Psoas muscle (tissue), 8 donors: ENCODE measurements at regions of chr5 and their contacts with region 1.

Region 1: DNA sequence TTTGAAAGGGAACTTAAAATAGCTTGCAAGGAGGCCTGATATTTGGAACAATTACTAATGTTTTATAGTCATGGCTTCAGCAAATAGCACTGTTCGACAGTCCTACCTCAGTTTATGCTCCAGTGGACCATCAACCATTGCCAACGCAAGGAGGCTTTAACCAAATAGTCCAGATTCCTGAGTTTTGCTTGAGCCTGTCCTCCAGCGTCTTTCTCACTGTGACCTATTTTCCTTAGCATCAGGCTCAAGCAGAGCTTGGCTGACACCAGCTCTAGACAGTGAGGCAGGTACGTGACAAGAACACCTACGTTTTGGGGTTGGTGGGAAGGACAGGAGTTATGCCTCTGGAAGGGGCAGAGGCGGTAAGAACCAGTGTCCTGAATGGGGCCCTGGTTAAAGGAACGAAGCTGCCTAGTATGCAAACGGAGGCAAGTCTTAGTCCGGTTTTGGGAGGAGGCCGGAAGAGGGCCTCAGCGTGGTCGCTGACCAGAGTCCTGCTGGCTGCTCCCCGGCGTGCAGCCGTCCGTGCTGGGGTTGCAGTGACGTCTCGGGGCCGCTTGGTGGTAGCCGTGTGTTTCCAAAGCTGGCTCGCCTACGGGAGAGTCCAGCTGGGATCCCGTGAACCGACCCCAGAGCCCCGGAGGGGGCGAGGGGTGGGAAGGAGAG is 998 bp upstream of the FGF18 start:
- DNase-seq: peak; percentile 82 to 89
- ATAC-seq: peak; percentile 86 to 91 (median 86)
- H3K4me3 ChIP-seq: peak overlapping the region; percentile 62
- H3K27ac ChIP-seq: no peak overlapping the region
- H3K4me1 ChIP-seq: peaks cover 19% of the 10 kb centered on the region
- H3K27me3 ChIP-seq: peaks cover 0 to 19% (median 0%) of the 10 kb centered on the region in 3 donors
- CTCF ChIP-seq: peak; percentile 93

Region 2: GRCh38 chr5:171405601-171406005 is 12.8 kb before region 1 on chr5:
- intact Hi-C with region 1: no loop called
- DNase-seq: no peak
- ATAC-seq: no peak
- H3K4me3 ChIP-seq: no peak overlapping the region
- H3K27ac ChIP-seq: no peak overlapping the region
- H3K4me1 ChIP-seq: no peaks in the 10 kb centered on the region
- H3K27me3 ChIP-seq: no peaks in the 10 kb centered on the region
- CTCF ChIP-seq: no peak

Region 3: GRCh38 chr5:171474230-171474813 is 55.9 kb after region 1 on chr5:
- intact Hi-C with region 1: no loop called
- DNase-seq: peak in 1 of 2 donors; percentile 63
- ATAC-seq: peak in 1 of 4 donors; percentile 51
- H3K4me3 ChIP-seq: no peak overlapping the region
- H3K27ac ChIP-seq: no peak overlapping the region
- H3K4me1 ChIP-seq: no peaks in the 10 kb centered on the region
- H3K27me3 ChIP-seq: no peaks in the 10 kb centered on the region
- CTCF ChIP-seq: no peak

Region 4: GRCh38 chr5:171571663-171572062 is 153.2 kb after region 1 on chr5:
- intact Hi-C with region 1: no loop called
- DNase-seq: no peak
- ATAC-seq: no peak
- H3K4me3 ChIP-seq: no peak overlapping the region
- H3K27ac ChIP-seq: no peak overlapping the region
- H3K4me1 ChIP-seq: no peaks in the 10 kb centered on the region
- H3K27me3 ChIP-seq: no peaks in the 10 kb centered on the region
- CTCF ChIP-seq: no peak

Region 5: DNA sequence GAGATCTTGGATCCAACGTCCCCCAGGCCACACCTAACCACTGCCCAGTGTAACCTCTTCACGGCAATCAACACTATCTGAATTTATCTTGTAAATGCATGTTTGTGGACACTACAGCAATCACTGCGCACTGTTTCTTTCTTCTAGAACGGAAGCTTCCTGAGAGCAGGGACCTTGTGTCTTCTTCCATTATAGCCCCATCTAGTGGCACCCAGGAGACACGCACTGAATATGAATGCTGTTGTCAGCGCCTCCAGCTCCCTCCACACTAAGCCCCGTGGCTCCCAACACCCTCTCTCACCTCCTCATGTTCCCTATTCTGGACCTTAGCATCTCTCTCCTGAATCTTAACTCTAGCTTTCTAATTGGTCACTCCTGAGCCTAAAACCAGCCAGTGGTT is 439.9 kb after region 1 on chr5:
- intact Hi-C with region 1: loop called in 1 of 2 experiments (anchors 5 kb)
- DNase-seq: no peak
- ATAC-seq: peak in 3 of 4 donors; percentile 48 to 70 (median 61)
- H3K4me3 ChIP-seq: no peak overlapping the region
- H3K27ac ChIP-seq: no peak overlapping the region
- H3K4me1 ChIP-seq: no peaks in the 10 kb centered on the region
- H3K27me3 ChIP-seq: no peaks in the 10 kb centered on the region
- CTCF ChIP-seq: peak; percentile 22

Region 6: DNA sequence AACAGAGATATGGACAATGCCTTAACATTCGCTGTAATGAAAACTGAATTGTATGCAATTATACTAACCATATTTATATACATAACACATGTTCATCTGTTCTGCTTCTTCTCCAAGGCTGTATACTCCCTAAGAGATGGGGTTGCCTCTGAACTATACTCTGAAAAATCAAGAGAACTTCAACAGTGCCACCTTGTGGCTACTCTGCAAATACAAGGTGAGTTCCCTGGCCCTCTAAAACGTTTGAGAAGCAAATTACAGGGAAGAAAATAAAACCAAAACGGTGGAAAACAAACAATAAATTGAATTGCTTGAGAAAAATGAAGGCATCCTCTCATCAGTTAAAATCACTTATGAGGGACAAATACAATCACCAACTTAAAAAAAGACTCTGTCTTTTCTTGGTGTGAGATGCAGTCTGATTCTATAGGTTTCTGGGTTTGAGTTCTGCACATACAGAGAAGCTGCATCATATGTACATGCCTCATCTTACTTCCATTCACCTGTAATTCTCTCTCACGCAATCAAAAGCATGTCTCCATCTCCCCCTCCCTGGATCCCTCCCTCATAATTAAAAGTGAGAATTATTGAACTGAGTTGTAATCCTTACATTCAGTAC is 489.4 kb after region 1 on chr5:
- intact Hi-C with region 1: loop called (anchors 1 to 2 kb)
- DNase-seq: no peak
- ATAC-seq: peak; percentile 71 to 88 (median 80)
- H3K4me3 ChIP-seq: no peak overlapping the region
- H3K27ac ChIP-seq: no peak overlapping the region
- H3K4me1 ChIP-seq: peaks cover 8% of the 10 kb centered on the region
- H3K27me3 ChIP-seq: no peaks in the 10 kb centered on the region
- CTCF ChIP-seq: peak; percentile 80

Region 7: DNA sequence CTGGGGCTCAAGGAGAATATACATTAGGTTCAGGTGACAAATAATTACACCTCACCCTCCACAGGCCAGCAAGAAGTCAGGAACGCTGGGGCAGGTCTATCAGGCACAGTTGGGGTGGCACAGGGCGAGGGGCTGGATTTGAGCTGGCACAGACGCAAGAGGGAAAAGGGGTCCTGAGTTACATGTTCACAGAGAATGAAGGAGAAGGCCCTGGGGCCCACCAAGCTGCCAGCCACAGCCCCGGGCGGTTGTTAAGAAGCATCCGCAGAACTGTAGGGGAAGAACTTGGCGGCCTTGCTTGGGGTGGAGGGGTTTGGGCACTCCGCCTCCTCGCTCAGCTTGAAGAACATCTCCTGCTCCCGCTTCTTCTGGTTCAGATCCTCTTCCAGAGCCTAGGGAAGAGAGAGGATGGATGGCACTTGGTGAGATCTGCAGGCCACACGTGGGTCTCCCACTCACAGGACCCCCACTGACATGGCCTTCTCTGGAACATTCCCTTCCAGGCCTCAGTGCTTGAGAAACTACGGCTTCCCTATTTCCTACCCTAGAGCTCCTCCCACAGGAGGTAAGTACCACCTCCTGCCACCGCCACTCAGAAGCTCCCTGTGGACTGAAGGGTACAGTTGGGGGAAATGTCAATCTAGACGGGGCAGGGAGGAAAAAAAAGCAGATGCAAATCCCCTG is 626.3 kb after region 1 on chr5:
- intact Hi-C with region 1: loop called (anchors 5 to 10 kb)
- DNase-seq: no peak
- ATAC-seq: no peak
- H3K4me3 ChIP-seq: no peak overlapping the region
- H3K27ac ChIP-seq: no peak overlapping the region
- H3K4me1 ChIP-seq: peaks cover 5% of the 10 kb centered on the region
- H3K27me3 ChIP-seq: no peaks in the 10 kb centered on the region
- CTCF ChIP-seq: no peak